ENCODE measurements at regions of chr5 and their contacts with region 1.

Region 1: GRCh38 chr5:59506285-59506877 is 387.1 kb downstream of the PDE4D start:
- DNase-seq: no peak
- ATAC-seq: no peak
- H3K4me3 ChIP-seq: no peak overlapping the region
- H3K4me3 Mint-ChIP-seq: no peak overlapping the region
- H3K27ac ChIP-seq: no peak overlapping the region
- H3K27ac Mint-ChIP-seq: no peak overlapping the region
- H3K4me1 ChIP-seq: no peaks in the 10 kb centered on the region
- H3K4me1 Mint-ChIP-seq: no peaks in the 10 kb centered on the region
- H3K27me3 ChIP-seq: peaks cover 0 to 2% of the 10 kb centered on the region in 2 donors
- H3K27me3 Mint-ChIP-seq: peaks cover 0 to 12% (median 4%) of the 10 kb centered on the region in 5 donors

Region 2: DNA sequence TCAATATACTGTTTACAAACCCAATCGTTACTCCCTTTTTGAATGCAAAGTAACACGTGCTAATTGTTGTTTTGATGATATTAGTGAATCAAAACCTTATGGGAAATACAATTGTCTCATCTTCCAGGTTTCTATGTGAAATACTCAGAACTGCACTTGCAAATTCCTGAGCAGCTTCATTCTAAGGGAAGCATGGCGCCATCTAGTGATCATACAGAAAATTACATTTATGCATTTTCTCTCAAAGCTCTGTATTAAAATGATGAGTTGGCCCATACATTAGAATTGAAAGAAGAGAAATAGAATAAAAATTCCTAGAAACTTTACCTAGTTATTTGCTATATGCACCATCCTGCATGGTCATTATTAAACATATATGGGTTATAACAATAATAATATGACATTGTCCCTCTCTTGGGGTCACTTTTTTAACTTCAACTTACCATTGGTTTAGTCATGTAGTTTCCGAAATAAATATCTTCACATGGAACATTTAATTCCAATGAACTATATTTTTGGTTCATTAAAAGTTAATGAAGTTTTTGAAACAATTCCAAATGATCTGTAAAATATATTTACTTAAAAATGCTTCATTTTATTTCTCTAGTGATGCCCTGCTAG is 167.2 kb after region 1 on chr5:
- CTCF ChIA-PET with region 1: interaction called, 3 read pairs
- POLR2A ChIA-PET with region 1: no interaction called
- intact Hi-C with region 1: loop called (anchors 1 to 5 kb)
- DNase-seq: peak in 5 of 9 donors; percentile 17 to 43 (median 27)
- ATAC-seq: peak; percentile 45
- H3K4me3 ChIP-seq: no peak overlapping the region
- H3K4me3 Mint-ChIP-seq: no peak overlapping the region
- H3K27ac ChIP-seq: no peak overlapping the region
- H3K27ac Mint-ChIP-seq: no peak overlapping the region
- H3K4me1 ChIP-seq: no peaks in the 10 kb centered on the region
- H3K4me1 Mint-ChIP-seq: peaks cover 0 to 5% (median 0%) of the 10 kb centered on the region in 7 donors
- H3K27me3 ChIP-seq: no peaks in the 10 kb centered on the region
- H3K27me3 Mint-ChIP-seq: peaks cover under 1 to 20% (median 6%) of the 10 kb centered on the region in 5 donors

Region 3: GRCh38 chr5:59724482-59725391 is 218.4 kb after region 1 on chr5:
- CTCF ChIA-PET with region 1: no interaction called
- POLR2A ChIA-PET with region 1: no interaction called
- intact Hi-C with region 1: loop called in 1 of 2 experiments (anchors 5 kb)
- DNase-seq: peak in 2 of 9 donors; percentile 4 to 27
- ATAC-seq: peak; percentile 46
- H3K4me3 ChIP-seq: no peak overlapping the region
- H3K4me3 Mint-ChIP-seq: no peak overlapping the region
- H3K27ac ChIP-seq: no peak overlapping the region
- H3K27ac Mint-ChIP-seq: no peak overlapping the region
- H3K4me1 ChIP-seq: no peaks in the 10 kb centered on the region
- H3K4me1 Mint-ChIP-seq: no peaks in the 10 kb centered on the region
- H3K27me3 ChIP-seq: no peaks in the 10 kb centered on the region
- H3K27me3 Mint-ChIP-seq: peaks cover 0 to 9% (median 7%) of the 10 kb centered on the region in 5 donors

Region 4: DNA sequence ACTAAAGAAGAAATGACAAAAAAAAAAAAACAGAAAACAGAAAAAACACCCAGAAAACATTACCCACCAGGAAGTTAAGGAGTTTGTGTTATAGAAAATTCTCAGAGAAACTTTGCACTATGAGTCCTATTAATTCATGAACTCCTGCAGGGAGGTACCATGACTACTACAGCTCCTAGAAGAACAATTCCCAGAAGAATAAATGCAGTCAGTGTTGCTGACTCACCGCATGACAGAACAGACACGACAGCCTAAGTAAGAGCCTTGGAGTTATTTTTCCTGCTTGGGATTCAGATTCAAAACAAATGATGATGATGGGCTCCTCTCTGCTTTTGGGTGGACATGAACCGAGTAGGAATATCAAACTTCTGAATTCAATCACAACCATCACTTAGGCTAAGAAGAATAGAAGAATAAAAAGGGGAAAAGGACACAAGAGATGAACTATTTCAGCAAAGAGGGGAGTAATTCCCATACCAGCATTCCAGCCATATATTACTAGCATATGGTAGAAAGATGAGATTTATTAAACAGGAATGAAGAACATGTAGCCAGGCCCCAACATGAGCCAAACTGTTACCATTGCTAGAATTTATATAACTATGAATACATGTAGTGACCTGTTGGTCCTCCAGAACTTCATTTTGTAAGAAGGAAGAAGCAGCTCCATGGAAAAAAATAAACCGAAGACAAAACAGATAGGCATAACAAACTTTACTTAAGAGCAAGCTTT is 596.7 kb after region 1 on chr5:
- CTCF ChIA-PET with region 1: no interaction called
- POLR2A ChIA-PET with region 1: no interaction called
- intact Hi-C with region 1: no loop called
- DNase-seq: no peak
- ATAC-seq: no peak
- H3K4me3 ChIP-seq: no peak overlapping the region
- H3K4me3 Mint-ChIP-seq: no peak overlapping the region
- H3K27ac ChIP-seq: no peak overlapping the region
- H3K27ac Mint-ChIP-seq: no peak overlapping the region
- H3K4me1 ChIP-seq: no peaks in the 10 kb centered on the region
- H3K4me1 Mint-ChIP-seq: no peaks in the 10 kb centered on the region
- H3K27me3 ChIP-seq: no peaks in the 10 kb centered on the region
- H3K27me3 Mint-ChIP-seq: no peaks in the 10 kb centered on the region